Transverse colon (tissue), 4 donors: ENCODE measurements at regions of chr1 and their contacts with region 1.

Region 1: GRCh38 chr1:3012456-3013291 is 8.6 kb upstream of the ACTRT2 start:
- DNase-seq: peak; percentile 43
- H3K4me3 ChIP-seq: peak overlapping the region in 1 of 4 donors; percentile 1
- H3K27ac ChIP-seq: no peak overlapping the region
- H3K4me1 ChIP-seq: peaks cover 0 to 11% (median 2%) of the 10 kb centered on the region in 4 donors
- H3K27me3 ChIP-seq: peaks cover 49% of the 10 kb centered on the region
- CTCF ChIP-seq: peak; percentile 60 to 93 (median 91)
- EP300 ChIP-seq: no peak
- POLR2A ChIP-seq: no peak

Region 2: GRCh38 chr1:2928366-2929325 is 84.0 kb before region 1 on chr1:
- in situ Hi-C with region 1: no loop called
- intact Hi-C with region 1: no loop called
- DNase-seq: no peak
- H3K4me3 ChIP-seq: no peak overlapping the region
- H3K27ac ChIP-seq: no peak overlapping the region
- H3K4me1 ChIP-seq: no peaks in the 10 kb centered on the region
- H3K27me3 ChIP-seq: peaks cover 43% of the 10 kb centered on the region
- CTCF ChIP-seq: no peak
- EP300 ChIP-seq: no peak
- POLR2A ChIP-seq: no peak

Region 3: DNA sequence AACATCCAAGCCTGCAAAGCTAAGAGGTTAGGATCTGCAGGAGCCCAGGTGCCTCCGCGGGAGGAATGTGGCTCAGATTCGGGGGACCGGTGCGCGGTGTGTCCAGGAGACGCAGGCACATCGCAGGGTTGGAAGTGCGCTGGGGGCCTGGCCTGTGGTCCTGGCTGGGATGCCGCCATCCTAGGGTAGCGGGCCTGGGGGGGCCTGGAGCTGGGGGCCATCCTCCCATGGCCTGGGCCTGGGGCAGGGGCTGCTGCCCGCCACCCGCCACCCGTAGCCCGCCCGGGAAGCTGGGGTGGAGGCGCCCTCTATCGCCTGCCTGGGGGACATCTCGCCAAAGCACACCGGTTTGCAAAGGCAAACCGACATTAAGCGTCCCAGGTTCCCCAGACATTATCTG is 271.2 kb after region 1 on chr1:
- in situ Hi-C with region 1: no loop called
- intact Hi-C with region 1: loop called (anchors 5 kb)
- DNase-seq: peak; percentile 16
- H3K4me3 ChIP-seq: no peak overlapping the region
- H3K27ac ChIP-seq: no peak overlapping the region
- H3K4me1 ChIP-seq: no peaks in the 10 kb centered on the region
- H3K27me3 ChIP-seq: peaks cover 36% of the 10 kb centered on the region
- CTCF ChIP-seq: peak; percentile 57 to 69 (median 65)
- EP300 ChIP-seq: no peak
- POLR2A ChIP-seq: no peak

Region 4: GRCh38 chr1:3410142-3410925 is 397.7 kb after region 1 on chr1:
- in situ Hi-C with region 1: loop called in 1 of 4 experiments (anchors 25 kb)
- intact Hi-C with region 1: loop called (anchors 5 kb)
- DNase-seq: peak; percentile 33
- H3K4me3 ChIP-seq: no peak overlapping the region
- H3K27ac ChIP-seq: no peak overlapping the region
- H3K4me1 ChIP-seq: no peaks in the 10 kb centered on the region
- H3K27me3 ChIP-seq: no peaks in the 10 kb centered on the region
- CTCF ChIP-seq: peak; percentile 40 to 56 (median 54)
- EP300 ChIP-seq: no peak
- POLR2A ChIP-seq: no peak

Region 5: DNA sequence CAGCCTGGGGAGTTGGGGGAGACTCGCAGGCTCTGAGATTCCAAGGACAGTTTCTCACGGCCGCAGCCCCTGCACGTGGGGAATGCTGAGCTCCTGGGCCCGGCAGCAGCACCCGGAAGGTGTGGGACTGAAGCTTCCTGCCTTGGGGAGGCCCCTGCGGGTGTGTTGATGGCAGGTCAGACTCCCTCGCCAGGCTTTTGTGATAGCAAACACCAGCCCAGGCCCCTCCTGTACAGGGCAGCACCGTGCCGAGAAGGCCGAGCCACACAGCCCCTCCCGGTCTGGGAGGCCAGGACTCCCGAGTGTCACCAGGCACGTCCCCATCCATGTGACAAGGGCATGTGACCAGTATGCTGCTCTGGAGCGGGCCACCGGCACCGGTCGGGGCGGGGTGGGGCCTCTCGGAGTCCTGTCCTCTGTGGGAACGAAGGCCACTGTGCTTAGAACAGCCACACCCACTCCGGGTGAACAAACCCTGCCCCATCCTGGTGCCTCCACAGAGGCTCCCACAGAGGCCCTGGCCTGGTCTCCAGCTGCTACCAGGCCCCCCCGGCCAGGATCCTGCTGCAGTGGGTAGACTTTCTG is 410.7 kb after region 1 on chr1:
- in situ Hi-C with region 1: loop called in 3 of 4 experiments (anchors 25 kb)
- intact Hi-C with region 1: loop called (anchors 5 kb)
- DNase-seq: peak; percentile 85
- H3K4me3 ChIP-seq: no peak overlapping the region
- H3K27ac ChIP-seq: peak overlapping the region; percentile 9 to 46 (median 39)
- H3K4me1 ChIP-seq: peaks cover 0 to 26% (median 10%) of the 10 kb centered on the region in 4 donors
- H3K27me3 ChIP-seq: peaks cover 17% of the 10 kb centered on the region
- CTCF ChIP-seq: no peak
- EP300 ChIP-seq: no peak
- POLR2A ChIP-seq: peak; percentile 15

Region 6: GRCh38 chr1:3431266-3431665 is 418.6 kb after region 1 on chr1:
- in situ Hi-C with region 1: loop called in 2 of 4 experiments (anchors 25 kb)
- intact Hi-C with region 1: no loop called
- DNase-seq: no peak
- H3K4me3 ChIP-seq: no peak overlapping the region
- H3K27ac ChIP-seq: no peak overlapping the region
- H3K4me1 ChIP-seq: no peaks in the 10 kb centered on the region
- H3K27me3 ChIP-seq: no peaks in the 10 kb centered on the region
- CTCF ChIP-seq: no peak
- EP300 ChIP-seq: no peak
- POLR2A ChIP-seq: no peak